ENCODE measurements at regions of chr10 and their contacts with region 1.

Region 1: GRCh38 chr10:71888623-71889387 is 37.8 kb upstream of the PSAP start:
- DNase-seq: peak; percentile 58
- H3K4me3 Mint-ChIP-seq: peak overlapping the region; percentile 83
- H3K27ac Mint-ChIP-seq: peak overlapping the region; percentile 70
- H3K4me1 Mint-ChIP-seq: peaks cover 9% of the 10 kb centered on the region
- H3K27me3 Mint-ChIP-seq: peaks cover 30% of the 10 kb centered on the region

Region 2: DNA sequence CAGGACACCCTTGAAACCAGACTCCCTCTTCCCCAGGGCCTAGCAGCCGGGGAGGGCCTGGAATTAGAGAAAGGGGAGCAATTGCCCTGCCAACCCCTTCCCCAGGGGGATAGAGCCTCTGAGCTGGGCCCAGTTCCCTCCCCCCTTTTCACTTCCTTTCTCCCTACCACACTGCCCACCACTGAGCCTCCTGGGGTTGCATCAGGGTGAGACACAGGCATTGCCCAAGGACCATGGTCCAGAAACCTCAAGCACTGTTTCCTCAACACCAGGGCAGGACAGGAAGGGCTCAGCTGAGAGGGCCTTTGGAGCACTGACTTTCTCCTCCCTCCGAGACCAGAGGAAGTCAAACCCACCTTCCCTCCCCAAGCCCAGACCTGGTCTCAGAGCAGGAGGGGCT is 113.5 kb before region 1 on chr10:
- intact Hi-C with region 1: no loop called
- DNase-seq: no peak
- H3K4me3 Mint-ChIP-seq: no peak overlapping the region
- H3K27ac Mint-ChIP-seq: no peak overlapping the region
- H3K4me1 Mint-ChIP-seq: peaks cover 43% of the 10 kb centered on the region
- H3K27me3 Mint-ChIP-seq: no peaks in the 10 kb centered on the region

Region 3: DNA sequence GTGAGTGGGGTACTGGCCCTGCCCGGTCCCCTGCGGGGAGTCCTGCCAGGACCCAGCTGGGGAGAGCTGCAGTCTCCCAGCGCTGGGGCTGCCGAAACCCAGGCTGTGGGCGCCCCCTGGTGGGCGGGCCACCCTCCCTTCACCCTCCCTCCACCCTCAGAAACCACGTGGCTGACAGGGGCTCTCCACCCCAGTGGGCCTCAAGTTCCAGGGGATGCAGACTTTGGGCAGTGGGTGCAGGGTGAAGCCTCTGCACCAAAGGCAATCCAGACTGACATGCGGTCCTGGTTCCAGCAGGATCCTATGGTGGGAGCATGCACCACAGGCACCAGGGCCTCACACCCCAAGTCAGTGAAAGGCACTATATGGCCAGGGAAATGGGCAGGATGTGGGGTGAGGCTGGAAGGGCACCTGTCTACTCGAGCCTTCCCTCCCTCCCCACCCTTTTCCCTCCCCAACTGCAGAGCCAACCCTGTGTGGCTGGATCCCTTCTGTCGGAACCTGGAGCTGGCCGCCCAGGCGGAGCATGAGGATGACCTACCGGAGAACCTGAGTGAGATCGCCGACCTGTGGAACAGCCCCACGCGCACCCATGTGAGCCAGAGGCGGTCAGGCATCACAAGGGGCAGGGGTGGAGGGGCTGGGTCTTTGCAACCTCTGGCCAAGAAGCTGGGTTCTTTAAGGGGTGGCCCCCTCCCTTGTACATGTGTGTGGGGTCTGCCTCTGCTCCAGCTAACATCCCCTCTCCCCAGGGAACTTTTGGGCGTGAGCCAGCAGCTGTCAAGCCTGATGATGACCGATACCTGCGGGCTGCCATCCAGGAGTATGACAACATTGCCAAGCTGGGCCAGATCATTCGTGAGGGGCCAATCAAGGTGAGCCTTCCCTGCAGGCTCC is 76.5 kb before region 1 on chr10:
- intact Hi-C with region 1: no loop called
- DNase-seq: peak; percentile 55
- H3K4me3 Mint-ChIP-seq: no peak overlapping the region
- H3K27ac Mint-ChIP-seq: no peak overlapping the region
- H3K4me1 Mint-ChIP-seq: no peaks in the 10 kb centered on the region
- H3K27me3 Mint-ChIP-seq: no peaks in the 10 kb centered on the region

Region 4: GRCh38 chr10:71850637-71851464 is 38.0 kb before region 1 on chr10 and contains the start of gene PSAP:
- intact Hi-C with region 1: loop called (anchors 2 kb)
- DNase-seq: peak; percentile 98
- H3K4me3 Mint-ChIP-seq: peak within 1 kb of the TSS; percentile 92
- H3K27ac Mint-ChIP-seq: peak within 1 kb of the TSS; percentile 64
- H3K4me1 Mint-ChIP-seq: peaks cover 34% of the 10 kb centered on the region
- H3K27me3 Mint-ChIP-seq: no peaks in the 10 kb centered on the region
- total RNA-seq, gene PSAP: 108 and 110 TPM in 2 replicates